ENCODE measurements at regions of chr4 and their contacts with region 1.

Region 1: DNA sequence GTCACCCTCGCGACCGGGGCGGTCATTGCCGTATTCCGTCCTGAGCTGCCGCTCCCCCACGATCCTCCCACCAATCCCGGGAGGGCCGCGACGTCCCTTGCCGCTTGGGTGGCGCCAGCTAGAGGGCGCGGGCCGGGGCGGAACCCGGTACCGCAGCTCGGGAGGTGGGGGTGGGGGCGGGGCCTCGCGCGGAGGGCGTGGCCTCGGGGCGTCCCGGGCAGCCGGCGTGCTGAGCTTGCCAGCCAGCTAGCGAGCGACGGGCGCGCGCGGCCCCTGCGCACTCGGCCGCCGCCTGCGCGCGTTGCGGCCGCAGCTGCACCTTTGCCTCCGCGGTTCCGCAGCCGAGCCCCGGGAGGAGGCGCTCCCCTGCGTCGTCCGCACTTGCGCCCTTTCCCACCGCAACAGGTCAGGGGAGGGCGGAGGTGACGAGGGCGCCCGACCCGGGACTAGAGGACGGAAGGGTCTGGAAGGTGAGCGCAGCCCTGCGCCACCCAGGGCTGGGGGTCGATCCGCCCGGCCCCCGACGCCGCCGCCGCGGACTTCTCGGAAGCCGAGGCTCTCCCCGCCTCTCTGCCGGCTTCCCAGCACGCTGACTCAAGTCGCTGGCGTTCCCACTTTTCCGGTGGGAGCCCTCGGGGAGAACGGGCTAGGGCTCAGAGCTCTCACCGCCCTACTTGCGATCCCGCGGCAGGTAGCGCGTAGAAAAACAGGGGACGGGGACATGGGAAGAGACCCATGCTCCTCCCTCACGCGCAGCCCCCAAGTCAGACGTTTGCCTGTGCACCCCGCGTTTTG is at the start of gene AFF1:
- DNase-seq: peak; percentile 92
- H3K4me3 Mint-ChIP-seq: peak within 1 kb of the TSS; percentile 86
- H3K27ac Mint-ChIP-seq: peak within 1 kb of the TSS; percentile 96
- H3K4me1 Mint-ChIP-seq: peaks cover 55% of the 10 kb centered on the region
- H3K27me3 Mint-ChIP-seq: no peaks in the 10 kb centered on the region

Region 2: DNA sequence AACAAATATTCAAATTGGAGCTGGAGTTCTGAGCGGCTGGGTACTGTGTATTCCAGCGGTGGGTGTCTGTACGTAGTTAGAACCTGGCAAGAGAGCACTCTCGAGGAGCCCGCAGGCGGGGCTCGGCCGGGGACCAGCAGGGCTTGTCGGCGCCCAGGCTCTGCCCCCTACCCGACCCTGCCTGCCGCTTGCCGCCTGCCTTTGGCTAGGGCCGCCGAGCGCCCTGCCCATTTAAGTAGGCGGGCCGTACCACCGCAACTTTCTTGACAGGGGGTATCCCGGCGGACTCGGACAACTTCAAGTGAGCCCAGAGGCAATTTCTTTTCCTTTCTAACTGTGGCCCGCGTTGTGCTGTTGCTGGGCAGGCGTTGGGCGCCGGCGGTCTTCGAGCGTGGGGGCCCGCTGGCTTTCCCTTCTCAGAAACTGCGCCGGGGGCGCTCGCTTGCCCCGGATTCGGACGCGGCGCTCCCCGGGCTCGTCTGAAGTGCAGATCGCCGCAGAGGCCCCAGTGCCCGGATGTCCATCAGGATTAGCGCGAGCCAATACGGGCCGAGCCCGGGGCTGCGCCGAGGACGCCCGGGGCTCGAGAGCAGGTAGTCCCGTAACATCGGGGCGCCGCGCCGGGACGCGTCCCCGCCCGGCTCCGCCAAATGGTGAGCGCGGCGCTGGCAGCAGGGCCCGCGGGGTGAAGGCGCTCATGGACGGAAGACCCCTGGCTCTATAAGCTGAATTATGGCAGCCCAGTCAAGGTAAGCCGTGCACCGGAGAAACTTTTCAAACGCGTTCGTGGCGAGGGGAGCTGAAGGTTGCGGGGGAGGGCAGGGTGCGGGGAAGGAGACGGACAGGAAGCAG is 71.9 kb after region 1 on chr4:
- CTCF ChIA-PET with region 1: interaction called, 26 read pairs
- DNase-seq: peak; percentile 91
- H3K4me3 Mint-ChIP-seq: peak overlapping the region; percentile 88
- H3K27ac Mint-ChIP-seq: peak overlapping the region; percentile 99
- H3K4me1 Mint-ChIP-seq: peaks cover 57% of the 10 kb centered on the region
- H3K27me3 Mint-ChIP-seq: no peaks in the 10 kb centered on the region

Measured in activated naive CD4-positive, alpha-beta T cell treated with anti-CD3 and anti-CD28 coated beads, Interleukin-2, amount 10 ng/mL, durations not matched to agents 7 days and 5 days (primary cell).